Breast epithelium (tissue), 4 donors: ENCODE measurements at regions of chr7 and their contacts with region 1.

Region 1: GRCh38 chr7:33024189-33024757 is 38.3 kb downstream of the NT5C3A start:
- DNase-seq: no peak
- H3K4me3 ChIP-seq: no peak overlapping the region
- H3K27ac ChIP-seq: no peak overlapping the region
- H3K4me1 ChIP-seq: no peaks in the 10 kb centered on the region
- H3K27me3 ChIP-seq: no peaks in the 10 kb centered on the region
- CTCF ChIP-seq: no peak
- POLR2A ChIP-seq: no peak

Region 2: GRCh38 chr7:33044986-33045385 is 20.7 kb after region 1 on chr7:
- intact Hi-C with region 1: loop called (anchors 1 kb)
- DNase-seq: no peak
- H3K4me3 ChIP-seq: no peak overlapping the region
- H3K27ac ChIP-seq: peak overlapping the region; percentile 5 to 80
- H3K4me1 ChIP-seq: peaks cover 0 to 3% of the 10 kb centered on the region in 2 donors
- H3K27me3 ChIP-seq: no peaks in the 10 kb centered on the region
- CTCF ChIP-seq: no peak
- POLR2A ChIP-seq: no peak